CD4-positive, alpha-beta memory T cell (primary cell): ENCODE measurements at regions of chr4 and their contacts with region 1.

Region 1: DNA sequence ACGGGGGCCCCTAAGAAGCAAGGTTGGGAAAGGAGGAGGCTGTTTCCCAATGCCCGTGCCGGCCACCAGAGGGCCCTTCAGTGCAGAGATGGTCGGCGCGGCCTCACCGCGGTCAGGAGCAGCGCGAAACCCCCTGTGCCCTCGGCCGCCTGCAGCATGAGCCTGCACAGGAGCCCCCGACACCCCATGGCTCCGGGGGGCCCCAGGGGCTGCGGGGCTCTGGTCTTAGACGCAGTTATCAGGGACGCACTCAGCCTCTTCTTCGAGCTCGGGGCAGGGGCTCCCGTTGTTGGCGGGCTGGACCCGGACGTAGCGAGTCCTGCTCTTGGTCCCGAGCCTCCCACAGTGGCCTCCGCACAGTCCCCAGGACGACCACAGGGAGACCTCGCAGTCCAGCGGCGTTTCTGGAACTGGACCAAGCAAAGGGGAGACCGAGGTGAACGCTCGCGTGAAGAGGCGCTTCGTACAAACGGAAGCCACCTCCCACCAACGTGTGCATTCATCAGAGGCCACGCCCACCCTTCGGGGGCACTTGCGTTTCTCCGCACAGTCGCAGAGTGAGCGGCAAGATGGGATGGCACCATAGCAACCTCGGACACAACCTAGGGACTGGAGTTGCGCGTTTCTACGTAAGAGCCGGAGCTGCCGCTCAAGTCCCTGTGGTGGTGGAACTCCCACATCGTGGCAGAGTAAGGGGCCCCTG is 5.0 kb downstream of the SPON2 start:
- DNase-seq: peak; percentile 81 to 91 (median 84)
- H3K4me3 ChIP-seq: peak overlapping the region; percentile 47 to 78
- H3K4me3 Mint-ChIP-seq: peak overlapping the region; percentile 83 to 90 (median 87)
- H3K27ac ChIP-seq: peak overlapping the region; percentile 72
- H3K27ac Mint-ChIP-seq: peak overlapping the region; percentile 51 to 92 (median 87)
- H3K4me1 ChIP-seq: peaks cover 25% of the 10 kb centered on the region
- H3K4me1 Mint-ChIP-seq: peaks cover 9 to 24% (median 16%) of the 10 kb centered on the region in 4 donors
- H3K27me3 ChIP-seq: peaks cover 9% of the 10 kb centered on the region
- H3K27me3 Mint-ChIP-seq: peaks cover 0 to 5% of the 10 kb centered on the region in 2 donors

Region 2: GRCh38 chr4:1156069-1156468 is 11.3 kb before region 1 on chr4:
- CTCF ChIA-PET with region 1: interaction called, 14 read pairs
- POLR2A ChIA-PET with region 1: interaction called, 3 read pairs
- intact Hi-C with region 1: no loop called
- DNase-seq: no peak
- H3K4me3 ChIP-seq: no peak overlapping the region
- H3K4me3 Mint-ChIP-seq: no peak overlapping the region
- H3K27ac ChIP-seq: no peak overlapping the region
- H3K27ac Mint-ChIP-seq: peak overlapping the region in 1 of 7 donors; percentile 68
- H3K4me1 ChIP-seq: no peaks in the 10 kb centered on the region
- H3K4me1 Mint-ChIP-seq: no peaks in the 10 kb centered on the region
- H3K27me3 ChIP-seq: no peaks in the 10 kb centered on the region
- H3K27me3 Mint-ChIP-seq: peaks cover 13% of the 10 kb centered on the region in 2 donors

Region 3: DNA sequence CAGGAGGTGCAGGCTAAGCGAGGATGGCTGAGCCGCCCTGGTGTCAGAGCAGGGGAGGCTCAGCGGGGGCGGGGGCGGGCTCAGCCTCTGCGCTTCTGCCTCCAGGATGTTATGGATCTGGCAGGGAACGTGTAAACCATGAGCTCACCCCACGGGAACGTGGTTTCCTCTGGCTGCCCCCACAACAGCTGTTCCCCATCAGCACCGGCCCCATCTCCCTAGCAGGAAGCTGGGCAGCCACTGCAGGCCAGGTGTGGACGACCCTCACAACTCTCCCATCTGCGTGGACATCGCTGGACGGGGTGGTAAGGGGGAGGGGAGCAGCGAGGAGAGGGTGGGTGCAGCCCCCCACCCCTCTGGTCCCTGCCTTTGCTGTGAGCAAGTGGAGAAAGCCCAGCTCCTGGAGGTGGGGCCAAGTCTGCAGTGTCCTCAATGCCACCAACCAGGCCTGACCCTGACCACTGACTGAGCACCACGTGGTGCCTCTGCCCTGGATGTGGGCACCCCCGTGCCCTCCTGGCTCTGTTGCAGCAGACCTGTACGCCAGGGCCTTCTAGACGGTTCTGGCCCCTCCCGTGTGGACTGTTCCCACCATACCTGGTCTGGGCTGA is 33.1 kb after region 1 on chr4:
- CTCF ChIA-PET with region 1: interaction called, 25 read pairs
- POLR2A ChIA-PET with region 1: interaction called, 25 read pairs
- intact Hi-C with region 1: loop called (anchors 1 kb)
- DNase-seq: no peak
- H3K4me3 ChIP-seq: peak overlapping the region; percentile 49 to 58
- H3K4me3 Mint-ChIP-seq: peak overlapping the region; percentile 68 to 89 (median 82)
- H3K27ac ChIP-seq: peak overlapping the region; percentile 50
- H3K27ac Mint-ChIP-seq: peak overlapping the region; percentile 64 to 100 (median 98)
- H3K4me1 ChIP-seq: peaks cover 56% of the 10 kb centered on the region
- H3K4me1 Mint-ChIP-seq: peaks cover 23 to 61% (median 40%) of the 10 kb centered on the region in 4 donors
- H3K27me3 ChIP-seq: no peaks in the 10 kb centered on the region
- H3K27me3 Mint-ChIP-seq: no peaks in the 10 kb centered on the region

Region 4: GRCh38 chr4:1249148-1249730 is 81.8 kb after region 1 on chr4:
- CTCF ChIA-PET with region 1: interaction called, 11 read pairs
- POLR2A ChIA-PET with region 1: interaction called, 50 read pairs
- intact Hi-C with region 1: loop called (anchors 1 kb)
- DNase-seq: peak; percentile 77 to 93 (median 90)
- H3K4me3 ChIP-seq: peak overlapping the region; percentile 68 to 73
- H3K4me3 Mint-ChIP-seq: peak overlapping the region; percentile 86 to 92 (median 90)
- H3K27ac ChIP-seq: peak overlapping the region; percentile 88
- H3K27ac Mint-ChIP-seq: peak overlapping the region; percentile 93 to 99 (median 96)
- H3K4me1 ChIP-seq: peaks cover 74% of the 10 kb centered on the region
- H3K4me1 Mint-ChIP-seq: peaks cover 39 to 79% (median 67%) of the 10 kb centered on the region in 4 donors
- H3K27me3 ChIP-seq: no peaks in the 10 kb centered on the region
- H3K27me3 Mint-ChIP-seq: no peaks in the 10 kb centered on the region

Region 5: GRCh38 chr4:1309261-1310010 is 142.0 kb after region 1 on chr4:
- CTCF ChIA-PET with region 1: no interaction called
- POLR2A ChIA-PET with region 1: no interaction called
- intact Hi-C with region 1: no loop called
- DNase-seq: peak in 4 of 5 donors; percentile 34 to 72 (median 42)
- H3K4me3 ChIP-seq: peak overlapping the region; percentile 33 to 39
- H3K4me3 Mint-ChIP-seq: peak overlapping the region; percentile 51 to 84 (median 80)
- H3K27ac ChIP-seq: peak overlapping the region; percentile 36
- H3K27ac Mint-ChIP-seq: peak overlapping the region; percentile 61 to 89 (median 83)
- H3K4me1 ChIP-seq: peaks cover 64% of the 10 kb centered on the region
- H3K4me1 Mint-ChIP-seq: peaks cover 48 to 77% (median 62%) of the 10 kb centered on the region in 4 donors
- H3K27me3 ChIP-seq: no peaks in the 10 kb centered on the region
- H3K27me3 Mint-ChIP-seq: no peaks in the 10 kb centered on the region

Region 6: DNA sequence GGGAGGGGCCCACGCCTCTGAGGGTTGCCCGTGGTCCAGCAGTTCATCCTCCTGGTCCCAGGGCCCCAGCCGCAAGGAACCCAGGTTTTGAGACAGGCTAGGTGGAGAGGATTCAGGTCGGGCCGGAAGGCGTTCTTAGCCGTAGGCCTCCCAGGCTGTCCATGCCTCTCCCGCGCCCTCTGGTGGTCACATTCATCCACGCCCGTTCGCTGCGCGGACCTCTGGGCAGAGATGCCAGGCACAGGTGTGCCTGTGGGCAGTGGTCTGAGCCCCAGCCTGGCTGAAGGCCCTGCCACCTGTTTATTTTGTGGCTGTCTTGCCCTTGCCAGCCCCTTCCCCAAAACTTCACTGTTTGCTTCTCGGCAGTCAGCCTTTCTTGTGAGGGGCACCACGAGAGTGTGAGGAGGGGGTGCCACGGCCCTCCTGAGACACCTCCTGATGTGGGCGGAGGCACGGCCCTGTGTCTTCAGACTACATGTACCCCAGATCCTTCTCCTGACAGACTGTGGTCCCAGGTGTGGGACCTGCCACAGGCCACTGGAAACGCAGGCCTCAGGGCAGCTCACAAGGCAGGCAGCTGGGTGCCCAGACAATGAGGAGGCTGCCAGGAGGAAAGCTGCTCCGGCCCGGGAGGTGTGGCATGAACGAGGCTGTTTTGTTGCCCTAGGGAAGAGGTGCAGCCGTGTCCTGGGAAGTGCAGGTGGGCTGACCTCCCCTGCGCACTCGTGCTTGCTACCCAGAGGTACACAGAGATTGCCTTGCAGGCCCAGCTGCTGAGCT is 184.6 kb after region 1 on chr4:
- CTCF ChIA-PET with region 1: interaction called, 9 read pairs
- POLR2A ChIA-PET with region 1: interaction called, 7 read pairs
- intact Hi-C with region 1: loop called (anchors 1 kb)
- DNase-seq: peak; percentile 81 to 86 (median 83)
- H3K4me3 ChIP-seq: no peak overlapping the region
- H3K4me3 Mint-ChIP-seq: peak overlapping the region in 1 of 8 donors; percentile 57
- H3K27ac ChIP-seq: no peak overlapping the region
- H3K27ac Mint-ChIP-seq: peak overlapping the region; percentile 68 to 93 (median 85)
- H3K4me1 ChIP-seq: peaks cover 20% of the 10 kb centered on the region
- H3K4me1 Mint-ChIP-seq: peaks cover 16 to 43% (median 20%) of the 10 kb centered on the region in 4 donors
- H3K27me3 ChIP-seq: no peaks in the 10 kb centered on the region
- H3K27me3 Mint-ChIP-seq: no peaks in the 10 kb centered on the region